ENCODE measurements at regions of chr20 and their contacts with region 1.

Region 1: DNA sequence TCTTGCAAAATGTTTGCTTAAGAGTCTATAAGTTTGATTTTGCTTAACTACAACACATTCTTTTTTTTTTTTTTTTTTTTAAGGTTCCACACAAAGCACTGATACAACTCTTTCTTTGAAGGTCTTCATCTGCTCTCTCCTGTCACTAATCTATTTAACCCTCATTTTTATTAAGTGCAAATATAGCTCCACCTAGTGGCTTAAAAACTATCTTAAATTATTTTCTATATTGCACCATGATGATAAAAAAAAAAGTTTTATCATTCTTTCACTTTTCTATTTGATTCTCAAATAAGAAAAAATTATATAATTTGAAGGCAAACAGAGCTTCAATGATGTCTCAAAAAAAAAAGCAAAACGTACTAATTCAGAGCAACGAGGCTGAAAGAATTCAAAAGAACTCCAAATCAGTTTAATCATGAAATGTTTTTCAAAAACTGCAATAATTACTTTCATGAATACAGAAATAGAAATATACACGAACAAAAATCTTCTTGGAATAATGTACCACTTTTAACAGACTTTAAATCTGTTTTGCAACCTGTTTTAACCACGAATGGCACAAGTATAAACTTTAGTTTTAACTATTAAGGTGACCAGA is 12.8 kb downstream of the ESF1 start:
- DNase-seq: no peak
- H3K4me3 ChIP-seq: no peak overlapping the region
- H3K27ac ChIP-seq: no peak overlapping the region
- H3K27me3 ChIP-seq: no peaks in the 10 kb centered on the region
- CTCF ChIP-seq: peak; percentile 50

Region 2: DNA sequence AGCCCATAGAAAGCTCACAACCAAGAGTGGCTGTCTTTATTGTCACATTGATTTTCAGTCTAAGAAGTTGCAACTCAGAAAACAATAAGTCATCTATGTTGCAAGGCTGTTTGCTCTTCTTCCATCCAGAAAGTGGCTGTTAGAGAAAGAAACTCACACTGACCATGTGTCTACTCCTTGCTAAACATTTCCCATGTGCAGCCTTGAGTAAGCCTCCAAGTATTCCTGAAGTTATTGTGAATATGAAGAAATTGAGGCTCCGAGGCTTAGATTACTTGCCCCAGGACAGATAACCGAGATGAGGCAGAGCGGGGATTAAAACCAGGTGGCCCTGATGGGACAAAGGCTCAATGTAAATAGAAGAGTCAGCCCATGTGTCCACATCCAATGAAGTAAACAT is 658.2 kb before region 1 on chr20:
- CTCF ChIA-PET with region 1: interaction called, 35 read pairs
- POLR2A ChIA-PET with region 1: no interaction called
- DNase-seq: no peak
- H3K4me3 ChIP-seq: no peak overlapping the region
- H3K27ac ChIP-seq: no peak overlapping the region
- H3K27me3 ChIP-seq: peaks cover 3% of the 10 kb centered on the region
- CTCF ChIP-seq: no peak

Region 3: GRCh38 chr20:13325033-13325432 is 446.9 kb before region 1 on chr20:
- CTCF ChIA-PET with region 1: interaction called, 31 read pairs
- POLR2A ChIA-PET with region 1: no interaction called
- DNase-seq: no peak
- H3K4me3 ChIP-seq: no peak overlapping the region
- H3K27ac ChIP-seq: no peak overlapping the region
- H3K27me3 ChIP-seq: no peaks in the 10 kb centered on the region
- CTCF ChIP-seq: peak; percentile 64

Region 4: GRCh38 chr20:13458860-13459451 is 313.0 kb before region 1 on chr20:
- CTCF ChIA-PET with region 1: interaction called, 16 read pairs
- POLR2A ChIA-PET with region 1: no interaction called
- DNase-seq: no peak
- H3K4me3 ChIP-seq: no peak overlapping the region
- H3K27ac ChIP-seq: no peak overlapping the region
- H3K27me3 ChIP-seq: no peaks in the 10 kb centered on the region
- CTCF ChIP-seq: peak; percentile 84

Region 5: GRCh38 chr20:13571662-13572061 is 200.3 kb before region 1 on chr20:
- CTCF ChIA-PET with region 1: no interaction called
- POLR2A ChIA-PET with region 1: no interaction called
- DNase-seq: no peak
- H3K4me3 ChIP-seq: no peak overlapping the region
- H3K27ac ChIP-seq: no peak overlapping the region
- H3K27me3 ChIP-seq: no peaks in the 10 kb centered on the region
- CTCF ChIP-seq: no peak

Region 6: GRCh38 chr20:13755809-13756208 is 16.1 kb before region 1 on chr20:
- CTCF ChIA-PET with region 1: interaction called, 43 read pairs
- POLR2A ChIA-PET with region 1: no interaction called
- DNase-seq: no peak
- H3K4me3 ChIP-seq: no peak overlapping the region
- H3K27ac ChIP-seq: no peak overlapping the region
- H3K27me3 ChIP-seq: no peaks in the 10 kb centered on the region
- CTCF ChIP-seq: no peak

Region 7: DNA sequence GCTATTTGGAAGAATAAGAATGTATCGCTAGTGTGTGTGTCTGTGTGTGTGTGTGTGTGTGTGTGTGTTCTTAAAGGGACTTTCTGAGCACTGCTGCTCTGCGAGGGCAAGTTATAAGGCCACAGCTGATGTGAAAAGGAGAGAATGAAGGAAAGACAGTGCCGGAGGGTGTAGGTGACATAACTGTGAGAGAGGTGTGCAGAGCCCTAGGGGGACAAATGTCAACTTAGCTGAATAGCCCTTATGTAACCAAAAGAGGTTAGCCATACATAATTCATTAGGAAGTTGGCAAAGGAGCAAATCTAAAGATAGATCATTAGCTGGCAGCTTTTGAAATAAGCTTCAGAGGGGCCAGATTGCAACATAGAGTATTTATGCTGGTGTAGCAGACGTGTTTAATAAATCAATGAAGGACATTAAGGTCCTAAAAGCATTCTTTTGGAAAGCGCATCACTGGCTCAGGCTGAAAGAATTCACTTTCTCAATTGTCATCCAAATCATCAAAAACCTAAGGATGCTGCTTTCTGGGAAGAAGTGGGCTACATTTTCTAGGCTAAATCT is 93.9 kb after region 1 on chr20:
- CTCF ChIA-PET with region 1: no interaction called
- POLR2A ChIA-PET with region 1: no interaction called
- DNase-seq: no peak
- H3K4me3 ChIP-seq: no peak overlapping the region
- H3K27ac ChIP-seq: no peak overlapping the region
- H3K27me3 ChIP-seq: no peaks in the 10 kb centered on the region
- CTCF ChIP-seq: no peak

Measured in AG04450 (cell line).